ENCODE measurements at regions of chr19 and their contacts with region 1.

Region 1: DNA sequence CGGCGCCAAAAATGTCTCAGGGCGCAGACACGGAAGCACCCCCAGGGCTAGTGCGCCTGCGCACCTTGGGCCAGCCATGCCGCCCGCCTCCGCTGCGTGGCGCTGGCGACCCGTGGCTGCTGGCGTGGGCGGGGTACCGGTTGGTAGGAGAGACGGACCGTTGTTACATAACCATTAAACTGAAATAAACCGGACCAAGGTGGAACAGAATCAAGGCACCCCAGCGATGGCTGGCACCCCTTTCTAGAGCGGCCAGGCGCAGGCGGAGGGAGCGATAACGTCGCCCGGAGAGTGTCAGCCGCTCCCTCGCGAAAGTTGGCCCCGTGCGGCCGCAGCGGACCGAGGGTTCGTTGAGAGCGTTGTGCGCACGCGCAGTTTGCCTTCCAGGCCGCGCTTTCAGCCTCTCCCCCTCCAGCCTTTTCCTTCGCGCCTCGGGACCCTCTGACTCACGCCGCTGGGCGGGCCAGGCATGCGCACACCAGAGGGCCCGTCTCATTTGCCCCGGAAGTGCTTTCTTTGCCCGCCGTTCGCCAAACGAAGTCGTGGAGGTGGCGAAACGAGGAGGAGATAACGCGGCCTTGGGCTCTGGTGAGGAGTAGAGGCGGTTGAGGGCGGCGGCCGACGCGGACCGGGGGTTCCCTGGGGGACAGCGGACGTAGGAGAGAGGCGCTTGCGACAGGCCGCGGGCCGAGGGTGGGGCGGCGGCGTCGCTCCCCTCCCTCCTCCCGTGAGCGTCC is at the starts of genes PLEKHJ1 and SF3A2:
- DNase-seq: peak; percentile 100
- ATAC-seq: peak; percentile 80 to 92 (median 81)
- H3K4me3 ChIP-seq: peak within 1 kb of the TSS; percentile 65
- H3K4me3 Mint-ChIP-seq: peak within 1 kb of the TSS; percentile 94
- H3K27ac ChIP-seq: peak within 1 kb of the TSS; percentile 99
- H3K27ac Mint-ChIP-seq: peak within 1 kb of the TSS; percentile 98 to 100
- H3K4me1 ChIP-seq: peaks cover 66% of the 10 kb centered on the region
- H3K4me1 Mint-ChIP-seq: peaks cover 56 to 67% of the 10 kb centered on the region in 2 donors
- H3K27me3 ChIP-seq: no peaks in the 10 kb centered on the region
- H3K27me3 Mint-ChIP-seq: no peaks in the 10 kb centered on the region
- CTCF ChIP-seq: peak; percentile 96
- total RNA-seq, gene PLEKHJ1: 36.7 to 45.8 (median 44.7) TPM
- total RNA-seq, gene SF3A2: 143 to 165 (median 147) TPM

Region 2: DNA sequence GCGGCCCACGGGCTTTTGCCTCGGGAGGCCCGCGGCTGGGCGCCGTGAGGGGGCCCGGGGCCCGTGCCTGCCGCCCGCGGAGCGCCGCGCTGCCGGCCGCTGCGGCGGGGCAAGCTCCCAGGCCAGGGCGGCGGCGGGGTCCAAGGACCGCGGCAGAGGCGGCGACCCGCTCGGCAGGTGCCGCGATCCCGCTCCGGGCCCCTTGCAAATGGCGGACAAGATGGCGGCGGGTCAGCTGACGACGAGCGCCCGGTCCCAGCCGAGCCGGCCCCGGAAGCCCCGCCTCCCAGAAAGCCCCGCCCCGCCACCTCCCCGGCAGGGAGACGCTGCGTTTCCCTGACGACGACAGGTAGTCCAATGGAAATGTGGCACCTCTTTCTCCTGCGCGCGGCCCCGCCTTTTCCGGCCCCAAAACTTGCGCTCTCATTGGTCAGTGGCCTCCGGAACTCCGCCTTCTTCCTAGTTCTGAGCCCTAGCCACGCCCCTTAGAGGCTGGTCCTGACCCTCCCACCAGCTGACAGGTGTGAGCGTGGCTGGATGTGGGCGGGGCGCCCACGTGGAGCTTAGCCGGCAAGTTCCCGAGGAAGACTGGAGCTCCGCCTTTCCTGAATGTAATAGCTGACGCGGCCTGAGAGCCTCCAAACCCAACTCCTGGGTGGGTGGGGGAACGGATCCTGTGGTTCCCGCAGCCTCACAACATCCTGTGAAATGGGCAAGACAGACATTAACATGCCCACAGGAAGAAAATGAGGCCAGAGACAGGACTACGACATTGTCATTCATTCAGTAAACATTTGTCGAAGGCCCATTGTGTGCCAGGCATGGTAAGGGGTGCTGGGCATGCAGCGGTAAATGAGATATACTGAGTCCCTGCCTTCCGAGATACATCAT is 84.9 kb before region 1 on chr19 and contains the start of gene AP3D1:
- intact Hi-C with region 1: loop called (anchors 10 kb)
- DNase-seq: peak; percentile 99 to 100
- ATAC-seq: peak; percentile 88 to 97 (median 90)
- H3K4me3 ChIP-seq: peak within 1 kb of the TSS; percentile 44
- H3K4me3 Mint-ChIP-seq: peak within 1 kb of the TSS; percentile 88
- H3K27ac ChIP-seq: peak within 1 kb of the TSS; percentile 51
- H3K27ac Mint-ChIP-seq: peak within 1 kb of the TSS; percentile 90 to 93
- H3K4me1 ChIP-seq: peaks cover 33% of the 10 kb centered on the region
- H3K4me1 Mint-ChIP-seq: peaks cover 24 to 40% of the 10 kb centered on the region in 2 donors
- H3K27me3 ChIP-seq: no peaks in the 10 kb centered on the region
- H3K27me3 Mint-ChIP-seq: no peaks in the 10 kb centered on the region
- CTCF ChIP-seq: no peak
- total RNA-seq, gene AP3D1: 74.6 to 93.1 (median 87.5) TPM

Region 3: GRCh38 chr19:2269244-2269947 is 32.9 kb after region 1 on chr19:
- intact Hi-C with region 1: loop called (anchors 1 kb)
- DNase-seq: peak; percentile 97 to 99
- ATAC-seq: peak; percentile 76 to 93 (median 83)
- H3K4me3 ChIP-seq: peak overlapping the region; percentile 97
- H3K4me3 Mint-ChIP-seq: peak overlapping the region; percentile 90
- H3K27ac ChIP-seq: peak overlapping the region; percentile 89
- H3K27ac Mint-ChIP-seq: peak overlapping the region; percentile 87 to 97
- H3K4me1 ChIP-seq: peaks cover 54% of the 10 kb centered on the region
- H3K4me1 Mint-ChIP-seq: peaks cover 19 to 43% of the 10 kb centered on the region in 2 donors
- H3K27me3 ChIP-seq: no peaks in the 10 kb centered on the region
- H3K27me3 Mint-ChIP-seq: no peaks in the 10 kb centered on the region
- CTCF ChIP-seq: no peak

Region 4: GRCh38 chr19:2289714-2290435 is 53.4 kb after region 1 on chr19:
- intact Hi-C with region 1: no loop called
- DNase-seq: peak; percentile 55 to 77
- ATAC-seq: peak; percentile 62 to 76 (median 68)
- H3K4me3 ChIP-seq: peak overlapping the region; percentile 47
- H3K4me3 Mint-ChIP-seq: peak overlapping the region; percentile 94
- H3K27ac ChIP-seq: peak overlapping the region; percentile 68
- H3K27ac Mint-ChIP-seq: peak overlapping the region; percentile 88 to 98
- H3K4me1 ChIP-seq: peaks cover 57% of the 10 kb centered on the region
- H3K4me1 Mint-ChIP-seq: peaks cover 29 to 54% of the 10 kb centered on the region in 2 donors
- H3K27me3 ChIP-seq: no peaks in the 10 kb centered on the region
- H3K27me3 Mint-ChIP-seq: no peaks in the 10 kb centered on the region
- CTCF ChIP-seq: no peak

Region 5: GRCh38 chr19:2315818-2316353 is 79.4 kb after region 1 on chr19:
- intact Hi-C with region 1: loop called (anchors 2 kb)
- DNase-seq: peak; percentile 47 to 48
- ATAC-seq: peak; percentile 90 to 94 (median 90)
- H3K4me3 ChIP-seq: no peak overlapping the region
- H3K4me3 Mint-ChIP-seq: no peak overlapping the region
- H3K27ac ChIP-seq: peak overlapping the region; percentile 12
- H3K27ac Mint-ChIP-seq: peak overlapping the region in 1 of 2 donors; percentile 68
- H3K4me1 ChIP-seq: peaks cover 19% of the 10 kb centered on the region
- H3K4me1 Mint-ChIP-seq: peaks cover 8 to 9% of the 10 kb centered on the region in 2 donors
- H3K27me3 ChIP-seq: peaks cover 11% of the 10 kb centered on the region
- H3K27me3 Mint-ChIP-seq: peaks cover 9 to 17% of the 10 kb centered on the region in 2 donors
- CTCF ChIP-seq: peak; percentile 55

Region 6: GRCh38 chr19:2328401-2329148 is 92.1 kb after region 1 on chr19 and contains the starts of genes LSM7 and SPPL2B:
- intact Hi-C with region 1: loop called (anchors 1 kb)
- DNase-seq: peak; percentile 95 to 98
- ATAC-seq: peak; percentile 87 to 90 (median 89)
- H3K4me3 ChIP-seq: peak within 1 kb of the TSS; percentile 93
- H3K4me3 Mint-ChIP-seq: peak within 1 kb of the TSS; percentile 99
- H3K27ac ChIP-seq: peak within 1 kb of the TSS; percentile 78
- H3K27ac Mint-ChIP-seq: peak within 1 kb of the TSS; percentile 91 to 98
- H3K4me1 ChIP-seq: peaks cover 73% of the 10 kb centered on the region
- H3K4me1 Mint-ChIP-seq: peaks cover 25 to 57% of the 10 kb centered on the region in 2 donors
- H3K27me3 ChIP-seq: no peaks in the 10 kb centered on the region
- H3K27me3 Mint-ChIP-seq: no peaks in the 10 kb centered on the region
- CTCF ChIP-seq: no peak
- total RNA-seq, gene LSM7: 52.0 to 80.2 (median 77.4) TPM
- total RNA-seq, gene SPPL2B: 63.2 to 83.8 (median 79.7) TPM

Measured in natural killer cell (primary cell).